Mammary epithelial cell (primary cell): ENCODE measurements at regions of chrX and their contacts with region 1.

Region 1: DNA sequence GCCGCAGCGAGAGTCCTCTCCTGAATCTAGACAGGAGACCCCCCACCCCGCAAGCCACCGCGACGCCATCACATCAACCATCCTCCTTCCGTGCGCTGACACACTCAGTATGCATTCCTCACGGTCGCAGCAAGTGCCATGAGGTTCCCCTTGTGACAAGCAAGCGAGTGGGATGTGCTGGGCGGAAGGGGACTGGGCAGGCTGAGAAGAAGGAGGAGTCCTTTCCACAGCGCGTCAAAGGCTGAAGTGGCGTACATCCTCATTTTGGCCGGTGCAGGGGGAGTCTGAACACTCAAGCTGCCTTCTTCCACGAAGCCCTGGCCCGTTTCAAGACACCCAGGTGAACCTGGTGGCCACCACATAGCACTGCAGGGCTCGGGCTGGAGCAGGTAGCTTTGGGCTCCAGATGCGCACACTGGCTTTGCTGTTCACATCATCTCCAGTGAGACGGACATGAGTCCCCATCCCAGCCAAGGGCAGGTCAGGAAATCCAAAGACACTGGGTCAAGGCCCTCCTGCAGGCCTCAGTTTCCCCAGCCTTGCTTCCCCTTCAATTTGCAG is 30.4 kb downstream of the CCNQ start:
- DNase-seq: no peak
- H3K4me3 ChIP-seq: no peak overlapping the region
- H3K27ac ChIP-seq: no peak overlapping the region
- H3K4me1 ChIP-seq: no peaks in the 10 kb centered on the region
- H3K27me3 ChIP-seq: peaks cover 3% of the 10 kb centered on the region
- CTCF ChIP-seq: peak in 1 of 2 donors; percentile 19

Region 2: DNA sequence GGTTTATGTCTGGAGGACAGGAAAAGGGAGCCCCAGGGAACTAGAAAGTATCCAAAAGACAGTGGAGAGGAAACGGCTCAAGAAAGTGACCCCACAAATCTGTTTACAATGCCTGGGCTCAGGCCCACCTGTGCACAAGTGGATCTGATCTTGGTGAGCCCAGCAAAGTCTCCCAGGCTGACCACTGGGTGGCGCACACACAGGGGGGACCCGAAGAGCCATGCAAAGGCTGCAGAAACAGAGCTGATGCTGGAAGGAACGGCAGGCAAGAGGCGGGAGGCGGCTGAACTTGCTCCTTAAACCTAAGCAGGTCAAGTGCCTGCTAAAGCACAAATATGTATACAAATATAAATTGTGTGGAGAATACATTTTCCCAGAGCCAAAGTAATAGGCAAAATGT is 107.7 kb before region 1 on chrX:
- CTCF ChIA-PET with region 1: no interaction called
- dilution Hi-C with region 1: no loop called
- in situ Hi-C with region 1: no loop called
- intact Hi-C with region 1: no loop called
- DNase-seq: no peak
- H3K4me3 ChIP-seq: no peak overlapping the region
- H3K27ac ChIP-seq: no peak overlapping the region
- H3K4me1 ChIP-seq: peaks cover 41% of the 10 kb centered on the region
- H3K27me3 ChIP-seq: no peaks in the 10 kb centered on the region
- CTCF ChIP-seq: peak; percentile 37 to 53

Region 3: GRCh38 chrX:153521034-153521433 is 47.5 kb before region 1 on chrX:
- CTCF ChIA-PET with region 1: no interaction called
- dilution Hi-C with region 1: loop called (anchors 5 kb)
- in situ Hi-C with region 1: no loop called
- intact Hi-C with region 1: no loop called
- DNase-seq: peak; percentile 4
- H3K4me3 ChIP-seq: no peak overlapping the region
- H3K27ac ChIP-seq: no peak overlapping the region
- H3K4me1 ChIP-seq: no peaks in the 10 kb centered on the region
- H3K27me3 ChIP-seq: peaks cover 6% of the 10 kb centered on the region
- CTCF ChIP-seq: no peak

Region 4: DNA sequence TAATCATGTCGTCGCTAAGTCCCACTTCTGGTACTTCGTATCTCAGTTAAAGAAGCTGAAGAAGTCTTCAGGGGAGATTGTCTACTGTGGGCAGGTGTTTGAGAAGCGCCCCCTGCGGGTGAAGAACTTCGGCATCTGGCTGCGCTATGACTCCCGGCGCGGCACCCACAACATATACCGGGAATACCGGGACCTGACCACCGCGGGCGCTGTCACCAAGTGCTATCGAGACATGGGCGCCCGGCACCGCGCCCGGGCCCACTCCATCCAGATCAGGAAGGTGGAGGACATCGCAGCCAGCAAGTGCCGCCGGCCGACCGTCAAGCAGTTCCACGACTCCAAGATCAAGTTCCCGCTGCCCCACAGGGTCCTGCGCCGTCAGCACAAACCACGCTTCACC is 93.7 kb after region 1 on chrX:
- CTCF ChIA-PET with region 1: no interaction called
- dilution Hi-C with region 1: loop called (anchors 5 kb)
- in situ Hi-C with region 1: no loop called
- intact Hi-C with region 1: no loop called
- DNase-seq: no peak
- H3K4me3 ChIP-seq: no peak overlapping the region
- H3K27ac ChIP-seq: no peak overlapping the region
- H3K4me1 ChIP-seq: no peaks in the 10 kb centered on the region
- H3K27me3 ChIP-seq: no peaks in the 10 kb centered on the region
- CTCF ChIP-seq: peak; percentile 16 to 58